Ascending aorta (tissue), 2 donors: ENCODE measurements at regions of chr5 and their contacts with region 1.

Region 1: DNA sequence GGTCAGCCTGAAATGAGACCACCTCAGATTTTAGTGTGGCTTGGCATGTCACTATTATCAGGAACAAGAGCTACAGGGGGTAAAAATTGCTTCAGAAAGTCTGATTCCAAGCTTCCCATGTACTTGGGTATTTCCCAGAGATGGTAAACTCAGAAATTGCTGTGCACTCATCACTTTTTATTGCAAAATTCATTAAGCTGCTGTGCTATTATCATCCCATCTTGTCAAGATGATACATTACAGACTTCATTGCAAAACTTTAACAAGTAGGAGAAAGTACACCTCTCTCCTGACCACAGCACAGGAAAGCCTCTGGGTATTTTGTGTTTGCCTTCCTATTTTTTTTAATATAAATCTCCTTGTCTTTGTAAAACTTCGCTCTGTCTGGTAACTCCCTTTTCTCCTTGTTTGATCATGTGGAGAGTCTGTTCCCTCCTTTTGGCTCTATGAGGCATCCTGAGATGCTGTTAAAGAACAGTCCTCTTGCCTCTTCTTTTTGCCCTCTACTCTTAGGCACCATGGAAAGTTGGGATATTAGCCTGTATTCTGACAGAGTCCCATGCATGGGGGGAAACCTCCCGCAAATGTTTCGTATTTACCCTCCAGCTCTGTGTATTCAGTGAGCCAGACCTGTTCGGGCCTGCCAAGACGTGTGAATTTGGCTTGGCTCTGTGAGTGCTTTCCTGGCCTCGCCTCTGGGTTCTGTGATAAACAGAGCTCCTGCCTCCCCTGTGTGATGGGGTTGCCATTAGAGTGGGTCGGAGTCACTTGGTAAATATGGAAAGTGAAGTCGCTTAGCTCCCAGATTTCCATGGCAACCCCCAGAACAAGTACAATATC is 260.7 kb downstream of the NR3C1 start:
- DNase-seq: peak; percentile 50 to 90
- H3K4me3 ChIP-seq: no peak overlapping the region
- H3K27ac ChIP-seq: peak overlapping the region; percentile 76 to 77
- H3K4me1 ChIP-seq: peaks cover 13 to 48% of the 10 kb centered on the region in 2 donors
- H3K27me3 ChIP-seq: no peaks in the 10 kb centered on the region
- CTCF ChIP-seq: no peak

Region 2: DNA sequence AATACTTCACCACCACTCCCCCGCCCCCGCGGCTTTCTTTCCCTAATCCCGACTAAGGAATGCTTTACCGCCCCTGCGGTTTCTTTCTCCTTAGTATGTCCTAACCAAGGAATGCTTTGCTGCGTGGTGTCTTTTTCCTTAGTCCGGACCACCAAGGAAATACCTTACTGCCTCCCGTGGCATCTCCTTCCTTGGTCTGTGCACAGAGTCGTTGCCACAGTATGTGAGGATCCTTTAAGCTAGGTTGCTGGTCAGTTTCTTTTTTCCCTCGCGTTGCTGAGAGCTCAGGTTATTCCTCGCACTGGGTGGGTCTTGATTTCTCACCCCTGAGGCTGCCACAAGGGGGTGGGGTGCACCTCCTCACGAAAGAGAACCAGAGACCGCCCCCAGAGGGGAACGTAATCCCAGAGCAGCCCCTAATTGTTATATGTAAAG is 48.7 kb before region 1 on chr5:
- intact Hi-C with region 1: loop called (anchors 1 kb)
- DNase-seq: no peak
- H3K4me3 ChIP-seq: peak overlapping the region in 1 of 2 donors; percentile 40
- H3K27ac ChIP-seq: no peak overlapping the region
- H3K4me1 ChIP-seq: no peaks in the 10 kb centered on the region
- H3K27me3 ChIP-seq: no peaks in the 10 kb centered on the region
- CTCF ChIP-seq: peak in 1 of 3 experiments; percentile 23

Region 3: DNA sequence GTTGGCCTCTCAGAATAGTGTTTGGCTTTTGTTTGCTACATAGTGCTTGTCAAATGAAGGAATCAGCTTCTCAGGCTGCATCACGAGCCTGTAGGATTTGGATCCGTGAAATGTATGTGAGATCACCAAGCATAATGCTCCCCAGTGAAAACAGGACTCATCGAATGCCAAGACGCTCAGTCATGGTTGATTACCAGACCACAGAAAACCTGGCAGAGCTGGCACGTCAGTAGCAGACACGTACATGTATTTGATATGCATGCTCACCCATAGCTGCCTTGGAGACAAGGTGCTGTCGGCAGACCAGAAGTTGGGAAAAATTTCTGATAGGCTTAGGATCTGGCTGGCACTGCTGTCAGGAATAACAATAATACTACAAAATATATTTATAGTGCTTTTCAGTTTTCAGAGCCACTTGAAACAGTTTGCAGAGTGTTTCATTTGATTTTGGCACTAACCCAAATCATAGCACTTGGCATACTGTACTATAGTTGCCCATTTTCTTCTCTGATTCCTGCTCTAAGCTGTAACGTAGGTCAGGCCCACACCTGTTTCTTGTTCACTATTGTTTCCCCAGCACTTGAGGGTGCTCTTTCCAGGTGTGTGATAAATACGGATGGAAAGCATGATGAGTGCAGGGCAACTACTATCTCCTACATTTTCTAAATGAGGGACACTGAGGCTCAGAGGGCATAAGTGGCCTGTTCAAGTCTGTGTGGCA is 34.6 kb after region 1 on chr5:
- intact Hi-C with region 1: loop called (anchors 5 kb)
- DNase-seq: peak; percentile 20 to 87
- H3K4me3 ChIP-seq: no peak overlapping the region
- H3K27ac ChIP-seq: peak overlapping the region in 1 of 2 donors; percentile 34
- H3K4me1 ChIP-seq: peaks cover 0 to 7% of the 10 kb centered on the region in 2 donors
- H3K27me3 ChIP-seq: no peaks in the 10 kb centered on the region
- CTCF ChIP-seq: no peak

Region 4: DNA sequence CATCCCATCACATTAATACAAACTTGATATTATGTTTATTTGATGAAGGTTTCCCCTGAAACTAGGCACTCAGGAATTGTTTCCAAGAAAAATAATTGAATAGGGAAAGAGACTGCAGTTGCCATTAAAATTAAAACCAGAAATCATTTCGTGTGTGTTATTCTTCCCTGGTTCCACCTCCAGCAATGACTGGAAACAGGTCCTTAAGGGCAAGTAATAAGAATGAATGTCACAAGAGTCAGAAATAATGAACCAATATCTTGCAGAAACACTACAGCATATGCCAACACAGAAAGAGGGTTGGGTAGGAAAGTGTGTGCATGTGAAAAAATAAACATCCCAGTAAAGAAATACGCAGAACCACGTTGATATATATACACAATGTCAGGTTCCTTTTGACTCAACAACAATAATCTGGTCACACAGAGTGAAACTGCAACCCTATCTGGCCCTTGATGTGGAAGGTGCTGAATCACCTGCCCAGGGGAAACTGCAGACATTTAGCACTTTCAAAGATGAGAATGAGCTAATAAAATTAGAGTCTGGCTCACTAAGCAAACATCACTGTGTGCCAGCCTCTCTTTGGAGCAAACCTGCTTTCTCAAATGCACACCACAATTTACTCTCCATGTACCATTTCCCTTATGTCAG is 684.2 kb after region 1 on chr5:
- intact Hi-C with region 1: no loop called
- DNase-seq: no peak
- H3K4me3 ChIP-seq: no peak overlapping the region
- H3K27ac ChIP-seq: no peak overlapping the region
- H3K4me1 ChIP-seq: no peaks in the 10 kb centered on the region
- H3K27me3 ChIP-seq: no peaks in the 10 kb centered on the region
- CTCF ChIP-seq: no peak